ENCODE measurements at regions of chr14 and their contacts with region 1.

Region 1: DNA sequence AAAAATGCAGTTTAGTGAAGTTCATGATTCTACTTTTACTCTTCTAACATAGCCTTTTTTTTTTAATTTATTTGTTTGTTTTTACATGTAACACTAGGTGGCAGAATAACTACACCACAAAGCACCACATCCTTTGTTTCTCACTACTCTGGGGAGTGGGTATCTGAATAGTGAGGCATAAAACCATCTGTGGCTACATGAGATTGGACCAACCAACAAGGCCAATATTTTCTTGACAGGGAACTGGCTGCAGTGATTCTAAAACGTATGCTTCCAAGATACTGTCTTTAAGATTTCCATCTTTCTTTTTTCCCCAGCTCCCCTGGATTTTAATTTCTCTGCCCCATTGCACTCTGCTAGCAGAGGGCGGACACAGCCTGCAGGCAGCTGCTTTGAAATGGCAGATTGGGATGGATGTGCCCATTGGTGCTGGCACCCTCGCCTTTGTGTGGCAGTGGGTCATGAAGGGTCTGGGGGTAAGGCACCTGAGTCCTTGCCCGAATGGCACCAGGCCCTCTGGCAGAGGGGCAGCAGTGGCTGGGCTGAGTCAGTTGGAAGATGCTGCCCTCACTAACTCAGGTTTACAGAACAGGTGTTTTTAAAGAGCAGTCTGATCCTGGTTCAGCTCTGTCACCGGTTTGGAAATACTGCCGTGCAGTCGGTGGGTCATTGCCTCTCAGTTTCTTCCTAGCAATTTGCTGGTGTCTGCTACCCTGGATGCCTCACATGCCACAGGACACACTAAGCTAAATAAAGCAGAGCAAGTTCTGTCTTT is 429.1 kb downstream of the RAD51B start:
- DNase-seq: peak; percentile 78
- ATAC-seq: peak; percentile 59
- H3K4me3 ChIP-seq: no peak overlapping the region
- H3K27ac ChIP-seq: peak overlapping the region; percentile 28; the same call in 1 of the 2 replicates
- H3K4me1 ChIP-seq: peaks cover 25% of the 10 kb centered on the region
- H3K27me3 ChIP-seq: no peaks in the 10 kb centered on the region
- CTCF ChIP-seq: peak; percentile 66
- POLR2A ChIP-seq: no peak
- RAD21 ChIP-seq: peak; percentile 89

Region 2: GRCh38 chr14:67943947-67944346 is 304.7 kb before region 1 on chr14:
- CTCF ChIA-PET with region 1: interaction called, 6 read pairs
- POLR2A ChIA-PET with region 1: no interaction called
- dilution Hi-C with region 1: no loop called
- in situ Hi-C with region 1: no loop called
- intact Hi-C with region 1: loop called (anchors 1 kb)
- DNase-seq: peak; percentile 87
- ATAC-seq: peak; percentile 53
- H3K4me3 ChIP-seq: no peak overlapping the region
- H3K27ac ChIP-seq: no peak overlapping the region
- H3K4me1 ChIP-seq: peaks cover 17% of the 10 kb centered on the region
- H3K27me3 ChIP-seq: no peaks in the 10 kb centered on the region
- CTCF ChIP-seq: peak; percentile 87
- POLR2A ChIP-seq: no peak
- RAD21 ChIP-seq: peak; percentile 88

Region 3: GRCh38 chr14:68392393-68393141 is 143.9 kb after region 1 on chr14:
- CTCF ChIA-PET with region 1: no interaction called
- POLR2A ChIA-PET with region 1: no interaction called
- dilution Hi-C with region 1: no loop called
- in situ Hi-C with region 1: no loop called
- intact Hi-C with region 1: loop called (anchors 5 kb)
- DNase-seq: no peak
- ATAC-seq: no peak
- H3K4me3 ChIP-seq: no peak overlapping the region
- H3K27ac ChIP-seq: no peak overlapping the region
- H3K4me1 ChIP-seq: peaks cover 31% of the 10 kb centered on the region
- H3K27me3 ChIP-seq: no peaks in the 10 kb centered on the region
- CTCF ChIP-seq: no peak
- POLR2A ChIP-seq: no peak
- RAD21 ChIP-seq: no peak

Region 4: DNA sequence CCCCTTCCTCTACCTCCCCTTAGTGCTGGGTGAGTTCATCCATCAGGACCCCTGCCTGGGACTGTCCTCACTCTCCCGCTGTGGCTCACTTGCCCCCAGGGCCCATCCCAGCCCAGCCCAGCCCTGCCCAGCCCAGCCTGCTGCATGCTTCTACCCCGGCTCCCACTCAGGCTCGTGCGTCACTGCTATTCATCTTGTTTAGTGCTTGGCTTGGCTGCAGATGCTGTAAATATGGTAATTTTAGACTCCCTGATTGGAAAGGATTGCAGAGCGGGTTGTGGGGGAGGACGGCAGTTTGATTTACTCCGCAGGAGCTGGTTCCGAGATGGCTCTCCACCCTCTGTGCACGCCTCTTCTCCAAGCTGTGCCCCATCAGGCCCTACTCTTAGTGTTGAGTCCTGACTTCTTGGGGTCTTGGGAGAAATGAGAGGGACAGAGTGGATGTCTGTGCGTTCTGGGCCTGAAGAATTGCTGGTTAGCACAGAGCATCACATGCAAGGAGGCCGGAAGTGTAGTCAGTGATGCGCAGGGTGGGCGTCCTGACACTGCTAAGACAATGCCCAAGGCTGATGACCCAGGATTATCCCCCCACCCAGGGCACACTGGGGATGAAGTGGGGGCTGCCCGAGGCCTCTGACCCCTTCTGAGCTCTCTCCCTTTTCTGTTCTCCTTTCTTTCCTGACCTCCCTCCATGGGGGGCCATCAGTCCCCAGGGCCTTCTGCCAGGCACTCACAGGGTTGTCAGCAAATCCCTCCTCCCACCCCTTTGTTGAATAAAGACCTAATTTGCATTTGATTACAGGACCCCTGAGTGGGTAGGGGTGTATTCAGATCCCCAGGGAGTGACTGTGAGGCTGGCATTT is 299.8 kb after region 1 on chr14:
- CTCF ChIA-PET with region 1: interaction called, 4 read pairs
- POLR2A ChIA-PET with region 1: no interaction called
- dilution Hi-C with region 1: no loop called
- in situ Hi-C with region 1: no loop called
- intact Hi-C with region 1: loop called (anchors 5 kb)
- DNase-seq: peak; percentile 98
- ATAC-seq: peak; percentile 79
- H3K4me3 ChIP-seq: no peak overlapping the region
- H3K27ac ChIP-seq: peak overlapping the region; percentile 95
- H3K4me1 ChIP-seq: peaks cover 45% of the 10 kb centered on the region
- H3K27me3 ChIP-seq: no peaks in the 10 kb centered on the region
- CTCF ChIP-seq: no peak
- POLR2A ChIP-seq: 0 out of 2 replicates have a peak, but pooled peaks have one; percentile 30
- RAD21 ChIP-seq: peak; percentile 31

Region 5: GRCh38 chr14:68598621-68599447 is 350.2 kb after region 1 on chr14:
- CTCF ChIA-PET with region 1: no interaction called
- POLR2A ChIA-PET with region 1: interaction called, 3 read pairs
- dilution Hi-C with region 1: no loop called
- in situ Hi-C with region 1: no loop called
- intact Hi-C with region 1: loop called (anchors 5 kb)
- DNase-seq: peak; percentile 97
- ATAC-seq: peak; percentile 87
- H3K4me3 ChIP-seq: peak overlapping the region; percentile 3; the same call in 1 of the 2 replicates
- H3K27ac ChIP-seq: peak overlapping the region; percentile 97
- H3K4me1 ChIP-seq: peaks cover 25% of the 10 kb centered on the region
- H3K27me3 ChIP-seq: no peaks in the 10 kb centered on the region
- CTCF ChIP-seq: no peak
- POLR2A ChIP-seq: no peak
- RAD21 ChIP-seq: peak; percentile 29

Region 6: GRCh38 chr14:68685419-68686204 is 436.9 kb after region 1 on chr14:
- CTCF ChIA-PET with region 1: no interaction called
- POLR2A ChIA-PET with region 1: no interaction called
- dilution Hi-C with region 1: no loop called
- in situ Hi-C with region 1: no loop called
- intact Hi-C with region 1: loop called (anchors 5 kb)
- DNase-seq: peak; percentile 84
- ATAC-seq: peak; percentile 25; the same call in 1 of the 2 replicates
- H3K4me3 ChIP-seq: no peak overlapping the region
- H3K27ac ChIP-seq: peak overlapping the region; percentile 77
- H3K4me1 ChIP-seq: peaks cover 47% of the 10 kb centered on the region
- H3K27me3 ChIP-seq: no peaks in the 10 kb centered on the region
- CTCF ChIP-seq: no peak
- POLR2A ChIP-seq: no peak
- RAD21 ChIP-seq: no peak